Heart right ventricle (tissue), 16 donors: ENCODE measurements at regions of chr12 and their contacts with region 1.

Region 1: GRCh38 chr12:43338848-43339526 is 213.0 kb downstream of the ADAMTS20 start:
- DNase-seq: peak in 1 of 2 donors; percentile 31
- ATAC-seq: peak; percentile 93 to 100 (median 96)
- H3K4me3 ChIP-seq: no peak overlapping the region
- H3K27ac ChIP-seq: peak overlapping the region in 6 of 10 donors; percentile 28 to 71 (median 48)
- H3K4me1 ChIP-seq: peaks cover 0 to 19% (median 16%) of the 10 kb centered on the region in 9 donors
- H3K27me3 ChIP-seq: no peaks in the 10 kb centered on the region
- CTCF ChIP-seq: peak; percentile 22 to 87 (median 70)

Region 2: DNA sequence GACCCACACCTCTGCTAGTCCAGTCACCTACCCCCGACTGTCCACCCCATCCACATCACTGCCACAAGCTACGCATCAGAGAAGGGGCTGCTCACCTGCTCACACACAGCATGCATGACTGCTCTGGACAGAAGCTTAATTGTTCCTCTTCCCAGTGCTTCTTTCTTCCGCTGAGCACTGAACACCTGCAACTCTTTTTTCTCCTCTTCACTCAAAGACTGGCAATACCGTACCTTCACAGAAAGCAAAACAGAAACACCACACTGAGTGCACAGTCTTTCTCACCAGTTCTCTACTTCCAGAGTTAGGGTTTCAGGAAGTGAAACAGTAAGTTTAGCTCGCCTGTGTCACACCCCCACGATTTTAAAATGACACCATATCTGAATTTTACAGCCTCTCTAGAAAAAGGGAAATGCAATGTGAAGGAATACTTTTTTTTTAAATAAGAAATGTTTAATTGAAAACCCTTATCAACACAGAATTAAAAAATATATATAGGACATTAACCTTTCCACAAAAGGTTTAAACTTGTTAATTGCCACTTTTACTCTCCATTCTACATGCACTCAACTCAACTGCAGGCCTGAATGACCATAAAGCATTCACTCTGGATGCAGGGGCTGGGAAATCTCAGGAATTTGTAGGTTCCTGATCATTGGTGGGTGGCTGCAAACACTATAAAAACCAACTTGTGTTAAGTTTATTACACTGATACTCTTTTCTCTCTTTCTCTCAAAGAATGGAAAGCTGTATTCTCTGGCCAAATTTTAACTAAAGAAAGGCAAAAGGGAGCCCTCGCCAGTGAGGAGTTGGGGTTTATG is 869.4 kb before region 1 on chr12:
- intact Hi-C with region 1: loop called in 1 of 10 experiments (anchors 10 kb)
- DNase-seq: no peak
- ATAC-seq: peak in 1 of 8 donors; percentile 23
- H3K4me3 ChIP-seq: peak overlapping the region in 3 of 10 donors; percentile 6 to 42 (median 6)
- H3K27ac ChIP-seq: peak overlapping the region in 2 of 10 donors; percentile 34 to 69
- H3K4me1 ChIP-seq: peaks cover 13 to 61% (median 50%) of the 10 kb centered on the region in 9 donors
- H3K27me3 ChIP-seq: no peaks in the 10 kb centered on the region
- CTCF ChIP-seq: no peak